ENCODE measurements at regions of chr19 and their contacts with region 1.

Region 1: GRCh38 chr19:45643024-45643926 is 4.1 kb upstream of the EML2 start:
- DNase-seq: peak; percentile 93
- ATAC-seq: peak; percentile 12
- H3K4me3 Mint-ChIP-seq: peak overlapping the region; percentile 54
- H3K27ac Mint-ChIP-seq: peak overlapping the region; percentile 87
- H3K4me1 Mint-ChIP-seq: peaks cover 65% of the 10 kb centered on the region
- H3K27me3 Mint-ChIP-seq: peaks cover 2% of the 10 kb centered on the region

Region 2: GRCh38 chr19:45439569-45440254 is 203.6 kb before region 1 on chr19:
- CTCF ChIA-PET with region 1: interaction called, 20 read pairs
- POLR2A ChIA-PET with region 1: no interaction called
- DNase-seq: peak; percentile 92
- ATAC-seq: peak; percentile 72
- H3K4me3 Mint-ChIP-seq: peak overlapping the region; percentile 62
- H3K27ac Mint-ChIP-seq: peak overlapping the region; percentile 83
- H3K4me1 Mint-ChIP-seq: peaks cover 37% of the 10 kb centered on the region
- H3K27me3 Mint-ChIP-seq: peaks cover 2% of the 10 kb centered on the region

Region 3: DNA sequence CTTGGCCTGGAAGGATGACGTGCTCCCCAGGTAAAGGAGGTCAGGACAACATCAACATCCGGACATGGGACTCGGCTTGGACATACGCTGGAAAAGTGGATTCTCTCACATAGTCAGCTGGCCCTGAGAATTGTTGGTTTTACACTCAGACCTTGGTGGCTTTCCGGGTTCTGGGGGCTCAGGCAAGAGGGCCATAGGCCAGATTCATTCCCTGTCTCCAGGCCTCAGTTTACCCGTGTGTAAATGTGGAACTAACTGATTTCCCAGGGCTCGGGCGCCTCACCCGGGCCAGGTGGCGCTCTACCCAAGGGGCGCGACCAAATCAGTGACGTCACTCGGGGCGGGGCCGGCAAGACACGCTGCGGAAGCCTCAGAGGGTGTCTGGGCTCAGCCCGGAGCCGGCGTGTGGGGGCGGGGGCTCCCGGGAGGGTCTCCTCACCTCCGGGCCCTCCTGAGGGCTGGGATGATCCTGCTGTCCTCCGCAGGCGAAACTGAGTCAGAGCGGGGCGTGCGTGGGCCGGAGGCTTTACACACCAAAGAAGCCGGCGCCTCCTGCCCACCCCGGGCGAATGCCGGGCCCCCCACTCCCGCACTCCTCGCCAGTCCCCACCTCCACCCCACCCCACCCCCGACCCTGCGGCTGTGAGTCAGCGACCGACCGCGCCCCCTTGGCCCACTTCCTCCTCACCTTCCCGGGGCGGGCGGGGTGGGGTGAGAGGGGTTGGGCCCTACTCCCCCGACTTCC is 136.9 kb before region 1 on chr19:
- CTCF ChIA-PET with region 1: interaction called, 13 read pairs
- POLR2A ChIA-PET with region 1: interaction called, 10 read pairs
- DNase-seq: peak; percentile 98
- ATAC-seq: peak; percentile 74
- H3K4me3 Mint-ChIP-seq: peak overlapping the region; percentile 88
- H3K27ac Mint-ChIP-seq: peak overlapping the region; percentile 98
- H3K4me1 Mint-ChIP-seq: peaks cover 42% of the 10 kb centered on the region
- H3K27me3 Mint-ChIP-seq: no peaks in the 10 kb centered on the region

Region 4: GRCh38 chr19:45591004-45591637 is 52.2 kb before region 1 on chr19:
- CTCF ChIA-PET with region 1: interaction called, 26 read pairs
- POLR2A ChIA-PET with region 1: interaction called, 4 read pairs
- DNase-seq: peak; percentile 60
- ATAC-seq: peak; percentile 72
- H3K4me3 Mint-ChIP-seq: no peak overlapping the region
- H3K27ac Mint-ChIP-seq: no peak overlapping the region
- H3K4me1 Mint-ChIP-seq: peaks cover 16% of the 10 kb centered on the region
- H3K27me3 Mint-ChIP-seq: peaks cover 27% of the 10 kb centered on the region

Region 5: GRCh38 chr19:45613926-45614725 is 29.1 kb before region 1 on chr19:
- CTCF ChIA-PET with region 1: interaction called, 47 read pairs
- POLR2A ChIA-PET with region 1: interaction called, 7 read pairs
- DNase-seq: peak; percentile 50
- ATAC-seq: peak; percentile 65
- H3K4me3 Mint-ChIP-seq: no peak overlapping the region
- H3K27ac Mint-ChIP-seq: peak overlapping the region; percentile 75
- H3K4me1 Mint-ChIP-seq: peaks cover 20% of the 10 kb centered on the region
- H3K27me3 Mint-ChIP-seq: no peaks in the 10 kb centered on the region

Region 6: DNA sequence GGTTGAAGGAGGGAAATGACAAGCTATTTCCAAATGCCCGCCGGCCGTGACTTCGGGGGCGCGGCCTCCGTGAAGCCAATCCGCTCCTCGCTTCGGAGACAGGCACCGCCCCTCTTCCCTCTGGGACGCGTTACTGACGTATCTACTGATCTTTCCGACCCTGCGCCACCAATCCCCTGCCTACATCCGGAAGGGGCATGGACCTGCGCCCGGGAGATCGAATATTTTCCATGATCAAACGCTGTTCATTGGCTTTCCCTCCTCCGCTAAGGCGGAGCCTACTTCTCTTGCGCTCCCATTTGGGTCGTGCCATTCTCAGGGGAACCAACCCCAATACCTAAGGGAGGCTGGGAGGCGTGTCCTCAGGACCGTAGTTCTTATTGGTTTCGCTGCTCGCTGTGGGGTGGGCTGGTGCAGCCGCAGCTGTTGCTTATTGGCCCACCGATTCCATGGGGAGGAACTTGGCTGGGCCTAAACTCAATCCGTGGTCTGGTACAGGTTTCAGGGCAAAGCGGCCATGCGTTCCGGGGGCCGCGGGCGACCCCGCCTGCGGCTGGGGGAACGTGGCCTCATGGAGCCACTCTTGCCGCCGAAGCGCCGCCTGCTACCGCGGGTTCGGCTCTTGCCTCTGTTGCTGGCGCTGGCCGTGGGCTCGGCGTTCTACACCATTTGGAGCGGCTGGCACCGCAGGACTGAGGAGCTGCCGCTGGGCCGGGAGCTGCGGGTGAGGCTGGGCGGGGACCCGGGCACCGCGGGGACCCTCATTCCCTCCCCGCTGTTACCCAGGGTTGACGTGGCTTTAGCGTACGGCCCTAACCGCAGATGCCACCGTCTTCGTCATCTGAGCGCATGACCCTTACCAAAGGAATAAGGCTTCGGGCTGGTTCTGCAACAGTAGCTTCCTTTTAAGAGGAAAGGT is 49.2 kb after region 1 on chr19 and contains the start of gene QPCTL:
- CTCF ChIA-PET with region 1: interaction called, 18 read pairs
- POLR2A ChIA-PET with region 1: interaction called, 7 read pairs
- DNase-seq: peak; percentile 99
- ATAC-seq: peak; percentile 95
- H3K4me3 Mint-ChIP-seq: peak within 1 kb of the TSS; percentile 91
- H3K27ac Mint-ChIP-seq: peak within 1 kb of the TSS; percentile 95
- H3K4me1 Mint-ChIP-seq: peaks cover 20% of the 10 kb centered on the region
- H3K27me3 Mint-ChIP-seq: no peaks in the 10 kb centered on the region
- total RNA-seq, gene QPCTL: 6.7 to 8.0 TPM

Region 7: GRCh38 chr19:45753546-45753945 is 110.3 kb after region 1 on chr19:
- CTCF ChIA-PET with region 1: no interaction called
- POLR2A ChIA-PET with region 1: no interaction called
- DNase-seq: no peak
- ATAC-seq: no peak
- H3K4me3 Mint-ChIP-seq: no peak overlapping the region
- H3K27ac Mint-ChIP-seq: no peak overlapping the region
- H3K4me1 Mint-ChIP-seq: no peaks in the 10 kb centered on the region
- H3K27me3 Mint-ChIP-seq: no peaks in the 10 kb centered on the region

Measured in activated CD8-positive, alpha-beta T cell treated with anti-CD3 and anti-CD28 coated beads, Interleukin-2, amount 10 ng/mL, durations not matched to agents 7 days and 5 days (primary cell).